Activated CD8-positive, alpha-beta memory T cell treated with anti-CD3 and anti-CD28 coated beads, Interleukin-2, amount 10 ng/mL, durations not matched to agents 7 days and 5 days (primary cell): ENCODE measurements at regions of chr1 and their contacts with region 1.

Region 1: DNA sequence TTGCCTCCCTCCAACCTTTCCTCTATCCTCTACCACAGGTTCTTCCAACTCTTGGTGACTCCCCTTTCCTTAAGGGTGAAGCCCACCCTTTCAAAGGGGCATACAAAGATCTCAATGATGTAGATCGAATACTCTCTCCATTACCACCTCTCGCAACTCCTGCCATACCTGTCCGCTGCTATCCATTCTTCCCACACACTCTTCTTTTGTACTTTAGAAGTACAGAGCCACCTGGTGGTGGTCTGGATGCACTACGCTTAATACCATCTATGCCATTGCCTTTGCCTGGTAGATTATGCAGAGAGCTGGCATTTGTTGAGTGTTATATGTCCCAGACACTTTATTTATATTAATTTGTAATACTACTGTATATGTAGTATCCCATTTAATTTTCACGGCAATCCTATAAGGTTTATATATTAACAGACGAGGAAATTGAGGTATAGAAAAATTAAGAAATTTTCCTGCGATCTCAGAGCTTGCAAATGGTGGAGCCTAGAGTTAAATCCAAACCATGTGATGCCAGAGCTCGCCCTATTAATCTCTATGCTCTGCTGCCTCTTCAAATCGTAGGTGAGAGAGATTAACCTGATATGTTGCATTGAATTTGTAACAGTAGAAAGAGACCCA is 22.9 kb downstream of the TSHB start:
- DNase-seq: peak; percentile 69
- ATAC-seq: peak; percentile 75
- H3K4me3 Mint-ChIP-seq: no peak overlapping the region
- H3K27ac Mint-ChIP-seq: no peak overlapping the region
- H3K4me1 Mint-ChIP-seq: peaks cover 7% of the 10 kb centered on the region
- H3K27me3 Mint-ChIP-seq: no peaks in the 10 kb centered on the region

Region 2: DNA sequence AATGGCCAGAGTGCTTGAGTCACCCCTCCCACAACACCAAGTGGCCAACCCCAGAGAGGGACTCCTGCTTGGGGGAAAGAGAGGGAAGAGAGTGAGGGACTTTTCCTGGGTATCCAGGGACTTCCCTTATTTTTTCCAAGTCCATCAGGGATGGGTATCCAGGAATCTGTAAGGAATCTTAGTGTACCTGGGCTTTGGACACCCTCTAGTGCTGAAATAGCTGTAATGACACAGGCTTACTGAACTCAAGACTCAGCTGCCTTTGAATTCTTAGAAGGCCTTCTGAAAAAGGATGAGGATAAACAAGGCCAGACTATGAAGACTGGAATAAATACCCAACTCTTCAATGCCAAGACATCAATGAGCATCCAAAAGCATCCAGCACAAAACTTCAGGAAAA is 10.9 kb before region 1 on chr1:
- CTCF ChIA-PET with region 1: interaction called, 13 read pairs
- DNase-seq: no peak
- ATAC-seq: no peak
- H3K4me3 Mint-ChIP-seq: no peak overlapping the region
- H3K27ac Mint-ChIP-seq: no peak overlapping the region
- H3K4me1 Mint-ChIP-seq: no peaks in the 10 kb centered on the region
- H3K27me3 Mint-ChIP-seq: no peaks in the 10 kb centered on the region

Region 3: GRCh38 chr1:115073298-115074087 is 20.9 kb after region 1 on chr1:
- CTCF ChIA-PET with region 1: interaction called, 10 read pairs
- DNase-seq: no peak
- ATAC-seq: no peak
- H3K4me3 Mint-ChIP-seq: no peak overlapping the region
- H3K27ac Mint-ChIP-seq: no peak overlapping the region
- H3K4me1 Mint-ChIP-seq: peaks cover 18% of the 10 kb centered on the region
- H3K27me3 Mint-ChIP-seq: peaks cover 12% of the 10 kb centered on the region